ENCODE measurements at regions of chr15 and their contacts with region 1.

Region 1: DNA sequence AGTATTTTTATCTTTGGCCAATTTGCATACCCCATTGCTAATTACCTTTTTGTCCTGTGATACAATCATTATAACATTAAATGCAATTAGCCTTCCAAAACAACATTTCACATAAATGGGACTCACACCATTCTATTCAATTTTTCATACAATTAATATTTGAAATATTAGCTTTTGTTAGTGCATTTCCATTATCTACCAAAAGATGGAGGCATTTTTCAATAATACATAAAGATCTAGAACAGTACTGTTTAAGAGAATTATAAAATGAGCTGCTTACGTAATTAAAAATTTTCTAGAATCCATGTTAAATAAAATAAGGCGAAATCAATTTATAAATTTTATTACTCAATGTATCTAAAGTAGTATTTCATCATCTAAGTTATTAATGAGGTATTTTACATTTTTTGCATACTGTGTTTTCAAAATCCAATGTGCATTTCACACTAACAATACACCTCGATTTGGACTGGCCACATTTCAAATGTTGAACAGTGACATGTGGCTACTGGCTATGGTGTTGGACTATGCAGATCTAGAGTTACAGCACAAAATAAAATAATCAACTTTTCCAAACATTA is 74.3 kb downstream of the TJP1 start:
- DNase-seq: no peak
- ATAC-seq: no peak
- H3K4me3 ChIP-seq: no peak overlapping the region
- H3K27ac ChIP-seq: no peak overlapping the region
- H3K4me1 ChIP-seq: no peaks in the 10 kb centered on the region
- H3K27me3 ChIP-seq: no peaks in the 10 kb centered on the region
- CTCF ChIP-seq: peak in 2 of 5 experiments; percentile 23 to 44
- POLR2A ChIP-seq: no peak

Region 2: GRCh38 chr15:29651476-29652239 is 96.3 kb before region 1 on chr15:
- in situ Hi-C with region 1: no loop called
- intact Hi-C with region 1: no loop called
- DNase-seq: no peak
- ATAC-seq: no peak
- H3K4me3 ChIP-seq: no peak overlapping the region
- H3K27ac ChIP-seq: no peak overlapping the region
- H3K4me1 ChIP-seq: no peaks in the 10 kb centered on the region
- H3K27me3 ChIP-seq: no peaks in the 10 kb centered on the region
- CTCF ChIP-seq: no peak
- POLR2A ChIP-seq: no peak

Region 3: GRCh38 chr15:29925227-29926082 is 177.5 kb after region 1 on chr15:
- in situ Hi-C with region 1: no loop called
- intact Hi-C with region 1: loop called (anchors 2 kb)
- DNase-seq: no peak
- ATAC-seq: no peak
- H3K4me3 ChIP-seq: no peak overlapping the region
- H3K27ac ChIP-seq: peak overlapping the region in 3 of 4 donors; percentile 14 to 25 (median 22)
- H3K4me1 ChIP-seq: no peaks in the 10 kb centered on the region
- H3K27me3 ChIP-seq: no peaks in the 10 kb centered on the region
- CTCF ChIP-seq: peak; percentile 52 to 65 (median 59)
- POLR2A ChIP-seq: no peak

Measured in gastrocnemius medialis (tissue), 4 donors.